ENCODE measurements at regions of chr15 and their contacts with region 1.

Region 1: GRCh38 chr15:95129574-95129973 is 898.2 kb downstream of the MCTP2 start:
- DNase-seq: no peak
- H3K4me3 ChIP-seq: no peak overlapping the region
- H3K27ac ChIP-seq: peak overlapping the region; percentile 24 to 82 (median 68)
- H3K4me1 ChIP-seq: peaks cover 11 to 52% (median 28%) of the 10 kb centered on the region in 6 donors
- H3K27me3 ChIP-seq: no peaks in the 10 kb centered on the region
- CTCF ChIP-seq: no peak
- POLR2A ChIP-seq: no peak

Region 2: GRCh38 chr15:95025924-95026728 is 103.4 kb before region 1 on chr15:
- intact Hi-C with region 1: loop called (anchors 10 kb)
- DNase-seq: no peak
- H3K4me3 ChIP-seq: no peak overlapping the region
- H3K27ac ChIP-seq: peak overlapping the region in 3 of 8 donors; percentile 1 to 15 (median 9)
- H3K4me1 ChIP-seq: peaks cover 0 to 9% (median 0%) of the 10 kb centered on the region in 6 donors
- H3K27me3 ChIP-seq: no peaks in the 10 kb centered on the region
- CTCF ChIP-seq: peak in 8 of 11 experiments; percentile 8 to 55 (median 42)
- POLR2A ChIP-seq: no peak

Region 3: DNA sequence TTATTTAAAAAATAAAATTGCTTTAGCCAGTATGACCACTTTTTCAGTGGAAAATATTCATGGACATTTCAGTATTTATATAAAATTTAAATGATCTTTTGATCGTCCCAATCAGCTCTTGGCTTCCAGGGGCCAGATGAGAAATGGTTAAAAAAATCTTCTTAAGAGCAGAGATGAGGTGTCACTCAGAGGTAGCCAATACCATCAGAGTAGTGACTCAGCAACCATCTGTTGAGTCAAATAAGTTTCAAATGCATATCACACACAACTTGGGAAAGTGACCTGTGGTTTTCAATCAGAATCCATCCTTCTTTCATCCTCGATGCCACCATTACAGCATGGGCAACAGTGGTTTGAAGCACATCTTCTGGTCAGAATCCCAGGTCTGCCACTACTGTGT is 242.1 kb after region 1 on chr15:
- intact Hi-C with region 1: no loop called
- DNase-seq: no peak
- H3K4me3 ChIP-seq: no peak overlapping the region
- H3K27ac ChIP-seq: no peak overlapping the region
- H3K4me1 ChIP-seq: peaks cover 0 to 22% (median 6%) of the 10 kb centered on the region in 6 donors
- H3K27me3 ChIP-seq: no peaks in the 10 kb centered on the region
- CTCF ChIP-seq: no peak
- POLR2A ChIP-seq: no peak

Measured in spleen (tissue), 13 donors.